ENCODE measurements at regions of chr1 and their contacts with region 1.

Region 1: DNA sequence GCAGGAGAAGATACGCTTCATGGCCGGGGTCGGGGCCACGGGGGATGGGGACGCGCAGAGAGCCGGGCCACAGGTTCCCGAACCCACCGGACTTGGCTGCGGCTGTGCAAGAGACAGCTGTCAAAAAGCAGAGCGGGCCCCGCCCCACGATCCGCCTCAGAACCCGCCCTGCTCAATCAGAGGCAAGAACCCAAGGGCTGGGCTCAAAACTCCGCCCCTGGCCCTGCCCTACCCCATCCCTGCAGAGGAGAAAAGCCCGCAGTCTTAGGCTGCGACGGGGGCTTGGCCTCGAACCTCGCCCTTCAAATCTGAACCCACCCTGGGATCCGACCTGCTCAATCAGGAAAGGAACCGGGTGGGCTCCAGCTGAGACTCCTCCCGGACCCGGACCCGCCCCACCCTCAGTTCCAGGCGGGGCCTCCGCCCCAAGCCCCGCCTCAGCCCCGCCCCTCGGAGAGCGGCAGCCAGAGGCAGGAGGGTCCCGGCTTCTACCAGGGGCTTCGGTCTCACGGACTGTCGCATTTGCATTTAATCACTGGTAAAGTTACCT is at the start of gene ANKRD35:
- DNase-seq: peak; percentile 84
- H3K4me3 Mint-ChIP-seq: peak within 1 kb of the TSS; percentile 78
- H3K27ac Mint-ChIP-seq: no peak within 1 kb of the TSS
- H3K4me1 Mint-ChIP-seq: peaks cover 25% of the 10 kb centered on the region
- H3K27me3 Mint-ChIP-seq: peaks cover 35% of the 10 kb centered on the region
- total RNA-seq, gene ANKRD35: 0.37 and 0.52 TPM in 2 replicates

Region 2: DNA sequence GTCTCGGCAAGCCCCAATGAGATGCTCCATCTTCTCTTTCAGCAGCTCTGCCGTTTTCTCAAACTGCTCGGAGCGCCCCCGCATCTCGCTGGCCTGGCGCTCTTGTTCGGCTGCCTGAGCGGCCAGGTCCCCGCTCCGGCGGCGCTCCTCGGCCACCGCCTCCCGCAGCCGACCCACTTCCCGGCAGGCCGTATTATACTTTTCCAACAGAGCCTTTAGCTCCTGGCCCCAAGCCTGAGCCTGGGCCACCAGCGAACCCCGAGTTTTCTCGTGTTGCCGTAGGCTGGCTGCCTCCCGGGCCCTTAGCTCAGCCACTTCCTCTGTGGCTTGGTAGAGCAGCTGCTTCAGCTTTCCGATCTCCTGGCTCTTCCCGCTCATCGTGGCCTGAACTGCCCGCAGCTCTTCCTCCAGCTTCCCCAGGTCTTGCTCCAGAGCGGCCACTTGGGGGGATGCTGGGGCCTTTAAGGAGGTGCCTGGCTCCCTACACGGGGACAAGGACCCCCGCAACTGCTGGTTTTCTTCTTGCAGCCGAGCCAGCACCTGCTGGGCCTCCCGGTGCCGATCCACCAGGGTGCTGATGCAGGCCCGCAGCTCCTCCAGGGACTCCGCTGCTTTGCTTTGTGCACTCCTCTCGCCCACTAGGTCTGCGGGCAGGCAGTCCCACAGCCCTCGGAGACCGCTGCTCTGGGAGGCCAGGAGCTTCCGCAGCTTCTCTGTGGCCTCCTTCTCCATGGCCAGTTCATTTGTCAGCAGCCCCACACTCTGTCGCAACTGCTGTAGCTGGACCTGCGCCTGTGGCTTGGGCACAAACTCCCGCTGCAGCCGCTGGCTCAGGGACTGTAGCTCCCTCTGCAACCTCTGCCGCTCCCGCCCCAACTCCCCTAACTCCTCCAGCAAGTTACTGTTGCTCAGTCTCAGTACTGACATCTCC is 13.6 kb before region 1 on chr1:
- intact Hi-C with region 1: no loop called
- DNase-seq: peak; percentile 30
- H3K4me3 Mint-ChIP-seq: peak overlapping the region; percentile 58
- H3K27ac Mint-ChIP-seq: peak overlapping the region; percentile 78
- H3K4me1 Mint-ChIP-seq: peaks cover 16% of the 10 kb centered on the region
- H3K27me3 Mint-ChIP-seq: peaks cover 43% of the 10 kb centered on the region

Region 3: GRCh38 chr1:145918144-145918992 is 32.6 kb after region 1 on chr1 and contains the start of gene PEX11B:
- intact Hi-C with region 1: loop called (anchors 1 kb)
- DNase-seq: peak; percentile 87
- H3K4me3 Mint-ChIP-seq: peak within 1 kb of the TSS; percentile 88
- H3K27ac Mint-ChIP-seq: peak within 1 kb of the TSS; percentile 91
- H3K4me1 Mint-ChIP-seq: peaks cover 41% of the 10 kb centered on the region
- H3K27me3 Mint-ChIP-seq: no peaks in the 10 kb centered on the region
- total RNA-seq, gene PEX11B: 30.6 and 31.2 TPM in 2 replicates

Region 4: DNA sequence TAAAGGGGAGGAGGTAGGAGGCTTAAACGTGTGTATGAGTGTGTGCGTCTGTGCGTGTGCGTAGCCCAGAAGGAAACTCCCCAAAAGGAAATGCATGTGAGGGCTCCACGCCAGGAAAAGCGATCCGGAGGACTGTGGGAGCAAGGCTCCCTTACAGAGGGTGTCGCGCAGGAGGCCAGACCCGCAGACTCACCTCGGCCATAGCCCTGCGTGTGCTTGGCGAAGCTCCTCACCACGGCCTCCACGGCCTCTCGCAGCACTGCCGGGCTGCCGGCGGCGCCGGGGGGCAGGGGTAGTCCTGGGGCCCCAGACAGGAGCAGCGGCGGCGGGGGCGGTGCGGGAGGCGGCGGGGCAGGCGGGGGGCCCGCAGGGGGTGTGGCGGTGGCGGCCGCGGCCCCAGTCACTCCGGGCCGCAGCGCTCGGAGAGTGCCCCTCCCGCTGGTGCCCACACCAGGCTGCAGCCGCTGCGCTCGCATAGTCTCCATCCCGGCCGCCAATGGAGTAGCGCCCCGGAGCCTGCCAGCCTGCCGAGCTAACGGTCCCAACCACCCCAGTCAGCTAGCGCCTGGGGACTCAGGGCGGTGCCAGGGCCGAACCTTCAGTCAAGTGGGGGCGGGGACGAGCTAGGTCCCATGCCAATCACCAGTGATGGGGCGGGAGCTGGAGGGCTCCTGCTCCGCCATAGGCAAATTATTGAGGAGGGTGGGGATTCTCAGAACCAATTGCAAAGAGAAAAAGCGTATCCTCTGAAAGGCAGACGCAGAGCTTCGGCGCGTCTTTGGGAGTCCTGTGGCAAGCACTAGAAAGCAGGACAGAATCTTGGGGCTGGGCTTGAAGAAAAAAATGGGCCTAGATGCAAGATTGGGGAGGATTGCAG is 71.9 kb after region 1 on chr1 and contains the start of gene LIX1L:
- intact Hi-C with region 1: loop called (anchors 2 kb)
- DNase-seq: peak; percentile 93
- H3K4me3 Mint-ChIP-seq: peak within 1 kb of the TSS; percentile 93
- H3K27ac Mint-ChIP-seq: peak within 1 kb of the TSS; percentile 93
- H3K4me1 Mint-ChIP-seq: peaks cover 68% of the 10 kb centered on the region
- H3K27me3 Mint-ChIP-seq: no peaks in the 10 kb centered on the region
- total RNA-seq, gene LIX1L: 30.3 and 32.2 TPM in 2 replicates

Measured in activated T-helper 1 cell treated with anti-CD3 and anti-CD28 coated beads, Interleukin-12 subunit alpha, Interleukin-12 subunit beta, Interleukin-2, Interleukin-4 antibody, amounts not matched to agents 30 ng/mL and 10 ng/mL and 1 ng/mL, durations not matched to agents 14 hours and 24 hours and 36 hours (primary cell).